ENCODE measurements at regions of chr19 and their contacts with region 1.

Region 1: GRCh38 chr19:14405758-14406644 is 13.1 kb downstream of the DDX39A start:
- DNase-seq: peak; percentile 100
- H3K4me3 ChIP-seq: peak overlapping the region in 1 of 2 experiments; percentile 14; a peak in 2 of 4 replicates
- H3K27ac ChIP-seq: peak overlapping the region; percentile 24 to 66; a peak in 3 of 4 replicates
- H3K4me1 ChIP-seq: peaks cover 0 to 7% of the 10 kb centered on the region in 2 experiments; a peak in 1 of 4 replicates
- H3K27me3 ChIP-seq: no peaks in the 10 kb centered on the region
- CTCF ChIP-seq: peak; percentile 66
- EP300 ChIP-seq: no peak
- RAD21 ChIP-seq: peak; percentile 82

Region 2: DNA sequence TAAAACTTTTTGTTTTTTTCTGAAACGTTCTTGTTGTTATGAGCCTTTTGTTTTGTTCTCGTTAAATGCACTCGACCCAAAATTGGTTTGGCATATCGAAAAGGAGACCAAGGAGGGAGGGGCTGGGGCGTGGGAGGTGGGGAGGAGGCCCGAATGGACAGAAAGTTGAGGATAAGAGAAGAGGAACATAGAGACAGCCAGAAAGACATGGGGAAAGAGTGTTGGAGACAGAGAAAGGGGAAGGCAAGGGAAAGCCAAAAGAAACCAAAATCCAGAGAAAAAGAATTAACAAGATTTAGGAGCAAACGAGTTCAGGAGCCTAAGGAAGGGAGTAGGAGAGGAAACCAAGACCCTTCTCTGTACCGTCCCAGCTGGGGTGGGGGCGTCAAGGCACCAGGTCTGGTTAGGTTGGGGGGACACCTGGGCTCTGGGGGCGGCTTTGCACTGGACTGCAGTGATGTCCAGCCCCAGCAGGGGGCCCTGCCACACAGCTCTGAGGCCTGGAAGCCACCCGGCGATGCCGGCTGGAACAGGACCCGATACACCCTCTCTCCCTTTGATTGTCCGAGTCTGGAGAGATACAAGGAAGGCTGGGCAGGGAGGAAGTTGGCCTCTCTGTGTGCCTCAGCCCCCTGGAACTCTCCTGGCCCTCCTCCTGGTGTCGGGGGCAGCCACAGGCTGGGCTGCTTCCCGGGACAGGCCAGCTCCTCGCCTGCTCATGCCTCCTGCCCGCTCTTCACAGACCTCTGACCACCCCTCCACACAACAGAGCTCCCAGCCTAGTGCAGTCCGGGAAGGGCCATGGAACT is 258.0 kb before region 1 on chr19:
- CTCF ChIA-PET with region 1: interaction called, 10 read pairs
- POLR2A ChIA-PET with region 1: no interaction called
- DNase-seq: peak; percentile 92
- H3K4me3 ChIP-seq: no peak overlapping the region; a peak in 1 of 4 replicates
- H3K27ac ChIP-seq: peak overlapping the region in 1 of 2 experiments; percentile 17; a peak in 1 of 4 replicates
- H3K4me1 ChIP-seq: peaks cover 0 to 26% of the 10 kb centered on the region in 2 experiments; a peak in 1 of 4 replicates
- H3K27me3 ChIP-seq: no peaks in the 10 kb centered on the region
- CTCF ChIP-seq: peak; percentile 77
- EP300 ChIP-seq: no peak
- RAD21 ChIP-seq: peak; percentile 80

Region 3: GRCh38 chr19:14325863-14326262 is 80.1 kb before region 1 on chr19:
- CTCF ChIA-PET with region 1: no interaction called
- POLR2A ChIA-PET with region 1: no interaction called
- DNase-seq: no peak
- H3K4me3 ChIP-seq: no peak overlapping the region
- H3K27ac ChIP-seq: no peak overlapping the region
- H3K4me1 ChIP-seq: no peaks in the 10 kb centered on the region
- H3K27me3 ChIP-seq: no peaks in the 10 kb centered on the region
- CTCF ChIP-seq: no peak
- EP300 ChIP-seq: no peak
- RAD21 ChIP-seq: no peak

Region 4: DNA sequence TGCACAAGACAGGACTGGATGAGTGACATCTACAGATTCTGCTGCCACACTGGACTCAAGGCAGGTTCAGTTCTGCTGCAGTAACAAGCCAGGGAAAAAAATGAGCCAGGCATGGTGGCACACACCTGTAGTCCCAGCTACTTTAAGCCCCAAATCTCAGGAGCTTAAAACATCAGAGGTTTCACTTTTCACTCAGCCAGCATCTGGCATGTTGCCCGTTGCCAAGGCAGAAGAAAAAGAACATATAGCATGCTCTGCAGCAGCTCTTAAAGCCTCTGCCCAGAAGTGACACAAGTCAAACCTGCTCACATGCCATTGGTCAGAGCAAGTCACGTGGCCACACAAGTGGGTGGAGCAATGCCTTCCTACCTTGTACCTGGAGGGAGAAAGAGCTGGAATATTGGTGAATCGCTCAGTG is 39.5 kb before region 1 on chr19:
- CTCF ChIA-PET with region 1: interaction called, 13 read pairs
- POLR2A ChIA-PET with region 1: interaction called, 3 read pairs
- DNase-seq: peak; percentile 51
- H3K4me3 ChIP-seq: no peak overlapping the region
- H3K27ac ChIP-seq: no peak overlapping the region
- H3K4me1 ChIP-seq: peaks cover 0 to 6% of the 10 kb centered on the region in 2 experiments; a peak in 1 of 4 replicates
- H3K27me3 ChIP-seq: no peaks in the 10 kb centered on the region
- CTCF ChIP-seq: no peak
- EP300 ChIP-seq: no peak
- RAD21 ChIP-seq: no peak

Region 5: GRCh38 chr19:14381689-14382474 is 24.1 kb before region 1 on chr19:
- CTCF ChIA-PET with region 1: interaction called, 18 read pairs
- POLR2A ChIA-PET with region 1: interaction called, 4 read pairs
- DNase-seq: no peak
- H3K4me3 ChIP-seq: peak overlapping the region; percentile 41 to 47; a peak in 3 of 4 replicates
- H3K27ac ChIP-seq: no peak overlapping the region
- H3K4me1 ChIP-seq: peaks cover 19 to 20% of the 10 kb centered on the region in 2 experiments; a peak in 3 of 4 replicates
- H3K27me3 ChIP-seq: no peaks in the 10 kb centered on the region
- CTCF ChIP-seq: no peak
- EP300 ChIP-seq: no peak
- RAD21 ChIP-seq: no peak

Region 6: DNA sequence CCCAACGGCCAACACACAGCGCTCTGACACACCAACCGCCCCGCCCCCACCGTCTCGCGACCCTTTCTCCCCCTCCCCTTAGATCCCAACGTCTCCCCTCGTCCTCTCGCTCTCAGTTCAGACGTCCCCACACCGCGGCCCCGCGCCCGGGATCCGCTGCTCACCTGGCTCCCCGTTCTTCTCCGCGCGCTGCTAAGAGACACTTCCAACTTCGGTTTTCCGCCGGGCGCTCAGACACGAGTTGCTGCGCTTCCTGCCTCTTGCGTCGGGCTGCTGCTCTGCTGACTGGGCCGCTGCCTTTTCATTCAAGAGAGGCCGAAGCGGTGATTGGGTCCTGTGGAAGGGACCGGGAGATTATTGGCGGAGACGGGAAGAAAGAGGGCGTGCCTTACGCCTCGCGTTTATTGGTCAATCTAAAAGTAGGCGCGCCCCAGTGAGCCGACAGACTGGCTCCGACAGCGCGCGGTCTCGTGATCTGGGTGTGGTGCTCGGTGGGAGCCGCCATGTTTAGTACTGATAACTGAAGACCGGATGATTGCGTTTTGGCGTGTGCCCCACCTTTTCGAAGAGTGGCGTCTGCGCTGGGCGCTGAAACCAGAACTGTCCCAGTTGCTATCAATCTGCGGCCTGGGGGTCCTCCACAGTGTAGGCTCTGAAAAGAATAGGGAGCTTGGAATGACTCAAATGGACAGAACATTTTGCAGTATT is 13.3 kb after region 1 on chr19 and contains the start of gene DDX39A:
- CTCF ChIA-PET with region 1: interaction called, 31 read pairs
- POLR2A ChIA-PET with region 1: interaction called, 5 read pairs
- DNase-seq: peak; percentile 95
- H3K4me3 ChIP-seq: peak within 1 kb of the TSS; percentile 61 to 98
- H3K27ac ChIP-seq: peak within 1 kb of the TSS; percentile 86 to 91
- H3K4me1 ChIP-seq: peaks cover 7 to 8% of the 10 kb centered on the region in 2 experiments; a peak in 2 of 4 replicates
- H3K27me3 ChIP-seq: no peaks in the 10 kb centered on the region
- CTCF ChIP-seq: no peak
- EP300 ChIP-seq: no peak
- RAD21 ChIP-seq: no peak
- polyA plus RNA-seq, gene DDX39A: 78.0 and 88.8 TPM in 2 replicates

Region 7: GRCh38 chr19:14472202-14472938 is 66.4 kb after region 1 on chr19:
- CTCF ChIA-PET with region 1: interaction called, 12 read pairs
- POLR2A ChIA-PET with region 1: no interaction called
- DNase-seq: peak; percentile 96
- H3K4me3 ChIP-seq: no peak overlapping the region; a peak in 1 of 4 replicates
- H3K27ac ChIP-seq: no peak overlapping the region
- H3K4me1 ChIP-seq: peaks cover 20 to 30% of the 10 kb centered on the region in 2 experiments; a peak in 3 of 4 replicates
- H3K27me3 ChIP-seq: no peaks in the 10 kb centered on the region
- CTCF ChIP-seq: peak; percentile 87
- EP300 ChIP-seq: no peak
- RAD21 ChIP-seq: peak; percentile 49